ENCODE measurements at regions of chr19 and their contacts with region 1.

Region 1: DNA sequence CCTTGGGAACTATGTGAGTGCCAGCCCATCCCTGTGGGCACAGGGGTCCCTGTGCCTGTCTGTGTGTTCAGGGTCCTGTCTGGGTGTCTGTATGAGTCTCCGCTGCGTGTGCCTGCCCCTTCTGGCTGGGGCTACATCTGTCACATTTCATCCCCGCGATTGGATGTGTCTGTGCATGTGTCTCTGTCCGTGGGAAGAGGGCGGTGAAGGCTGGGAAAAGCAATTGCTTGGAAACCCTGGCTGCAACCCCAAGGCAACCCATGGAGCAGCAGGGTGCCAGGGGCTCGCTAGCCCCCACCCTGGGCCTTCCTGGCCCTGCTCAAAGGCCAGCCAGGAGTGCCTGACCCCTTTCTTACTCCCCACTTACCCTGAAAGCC is 1.4 kb downstream of the MAG start:
- DNase-seq: no peak
- H3K4me3 ChIP-seq: no peak overlapping the region
- H3K27ac ChIP-seq: no peak overlapping the region
- H3K4me1 ChIP-seq: no peaks in the 10 kb centered on the region
- H3K27me3 ChIP-seq: peaks cover 6% of the 10 kb centered on the region
- CTCF ChIP-seq: no peak

Region 2: GRCh38 chr19:35240327-35240726 is 53.0 kb before region 1 on chr19:
- CTCF ChIA-PET with region 1: no interaction called
- dilution Hi-C with region 1: loop called (anchors 5 kb)
- in situ Hi-C with region 1: no loop called
- intact Hi-C with region 1: no loop called
- DNase-seq: no peak
- H3K4me3 ChIP-seq: no peak overlapping the region
- H3K27ac ChIP-seq: no peak overlapping the region
- H3K4me1 ChIP-seq: no peaks in the 10 kb centered on the region
- H3K27me3 ChIP-seq: no peaks in the 10 kb centered on the region
- CTCF ChIP-seq: no peak

Region 3: GRCh38 chr19:35757749-35758608 is 464.6 kb after region 1 on chr19 and contains the start of gene PROSER3:
- CTCF ChIA-PET with region 1: no interaction called
- dilution Hi-C with region 1: no loop called
- in situ Hi-C with region 1: no loop called
- intact Hi-C with region 1: no loop called
- DNase-seq: peak; percentile 99
- H3K4me3 ChIP-seq: peak within 1 kb of the TSS; percentile 71 to 83 (median 76)
- H3K27ac ChIP-seq: peak within 1 kb of the TSS; percentile 91
- H3K4me1 ChIP-seq: peaks cover 19% of the 10 kb centered on the region
- H3K27me3 ChIP-seq: no peaks in the 10 kb centered on the region
- CTCF ChIP-seq: no peak
- total RNA-seq, gene PROSER3: 9.7 to 48.3 TPM